ENCODE measurements at regions of chr18 and their contacts with region 1.

Region 1: GRCh38 chr18:4106407-4107033 is 348.6 kb downstream of the DLGAP1 start:
- DNase-seq: peak; percentile 58
- H3K4me3 ChIP-seq: no peak overlapping the region
- H3K27ac ChIP-seq: no peak overlapping the region
- H3K4me1 ChIP-seq: no peaks in the 10 kb centered on the region
- H3K27me3 ChIP-seq: no peaks in the 10 kb centered on the region
- CTCF ChIP-seq: peak; percentile 76 to 82
- POLR2A ChIP-seq: no peak

Region 2: GRCh38 chr18:4096486-4096885 is 10.0 kb before region 1 on chr18:
- CTCF ChIA-PET with region 1: interaction called, 15 read pairs
- POLR2A ChIA-PET with region 1: no interaction called
- dilution Hi-C with region 1: no loop called
- intact Hi-C with region 1: no loop called
- DNase-seq: no peak
- H3K4me3 ChIP-seq: no peak overlapping the region
- H3K27ac ChIP-seq: no peak overlapping the region
- H3K4me1 ChIP-seq: no peaks in the 10 kb centered on the region
- H3K27me3 ChIP-seq: no peaks in the 10 kb centered on the region
- CTCF ChIP-seq: no peak
- POLR2A ChIP-seq: no peak

Region 3: DNA sequence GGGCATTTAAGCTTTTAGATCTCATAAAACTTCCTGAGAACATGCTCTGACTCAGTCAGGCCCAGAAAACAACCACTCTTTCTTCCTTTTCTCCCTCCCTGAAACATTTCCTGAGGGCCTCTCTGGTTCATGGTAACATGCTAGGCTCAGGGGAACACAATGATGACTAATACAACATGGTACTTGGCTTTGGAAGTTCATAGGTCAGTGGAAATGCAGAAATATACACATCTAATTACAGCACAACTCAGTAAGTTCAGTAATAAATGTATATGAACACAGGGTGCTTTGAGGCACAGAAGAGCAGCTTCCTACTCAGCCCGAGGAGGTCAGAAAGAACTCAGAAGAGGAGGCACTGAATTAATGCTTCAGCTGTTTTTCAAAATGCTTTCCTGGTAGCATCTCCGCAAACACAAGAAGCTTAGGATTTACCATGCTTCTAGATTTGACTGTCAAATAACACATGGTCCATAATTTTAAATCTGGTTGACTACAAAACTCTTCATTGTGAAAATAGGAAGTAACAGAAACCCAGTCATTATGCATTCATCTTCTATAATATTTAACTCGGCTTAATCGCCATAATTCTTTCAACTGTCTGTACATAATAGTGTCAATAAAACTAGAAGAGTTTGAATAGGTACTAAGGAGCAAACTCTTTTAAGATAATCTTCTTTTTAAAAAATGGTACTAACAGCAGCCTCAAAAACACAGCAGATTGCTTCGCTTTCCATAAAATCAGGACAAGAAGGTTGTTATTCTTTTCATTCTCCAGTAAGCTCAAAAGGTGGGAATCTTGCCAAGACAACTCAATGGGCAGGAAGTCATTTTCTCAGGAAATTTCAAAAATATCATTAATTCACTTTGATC is 97.3 kb after region 1 on chr18:
- CTCF ChIA-PET with region 1: no interaction called
- POLR2A ChIA-PET with region 1: no interaction called
- dilution Hi-C with region 1: no loop called
- intact Hi-C with region 1: no loop called
- DNase-seq: peak; percentile 9
- H3K4me3 ChIP-seq: no peak overlapping the region
- H3K27ac ChIP-seq: no peak overlapping the region
- H3K4me1 ChIP-seq: no peaks in the 10 kb centered on the region
- H3K27me3 ChIP-seq: no peaks in the 10 kb centered on the region
- CTCF ChIP-seq: no peak
- POLR2A ChIP-seq: no peak

Region 4: GRCh38 chr18:5021558-5021957 is 915.0 kb after region 1 on chr18:
- CTCF ChIA-PET with region 1: interaction called, 35 read pairs
- POLR2A ChIA-PET with region 1: no interaction called
- dilution Hi-C with region 1: no loop called
- intact Hi-C with region 1: loop called (anchors 1 kb)
- DNase-seq: no peak
- H3K4me3 ChIP-seq: no peak overlapping the region
- H3K27ac ChIP-seq: no peak overlapping the region
- H3K4me1 ChIP-seq: no peaks in the 10 kb centered on the region
- H3K27me3 ChIP-seq: no peaks in the 10 kb centered on the region
- CTCF ChIP-seq: no peak
- POLR2A ChIP-seq: no peak

Region 5: GRCh38 chr18:5057386-5058348 is 951.1 kb after region 1 on chr18:
- CTCF ChIA-PET with region 1: interaction called, 116 read pairs
- POLR2A ChIA-PET with region 1: no interaction called
- dilution Hi-C with region 1: no loop called
- intact Hi-C with region 1: no loop called
- DNase-seq: peak; percentile 50
- H3K4me3 ChIP-seq: no peak overlapping the region
- H3K27ac ChIP-seq: no peak overlapping the region
- H3K4me1 ChIP-seq: no peaks in the 10 kb centered on the region
- H3K27me3 ChIP-seq: peaks cover 0 to 1% of the 10 kb centered on the region in 2 experiments
- CTCF ChIP-seq: peak; percentile 61 to 72
- POLR2A ChIP-seq: no peak